ENCODE measurements at regions of chr22 and their contacts with region 1.

Region 1: GRCh38 chr22:41197038-41197972 is 7.8 kb upstream of the L3MBTL2 start:
- DNase-seq: peak; percentile 84 to 93 (median 88)
- ATAC-seq: peak; percentile 88 to 97 (median 96)
- H3K4me3 ChIP-seq: peak overlapping the region; percentile 39 to 91 (median 76)
- H3K27ac ChIP-seq: peak overlapping the region in 10 of 12 donors; percentile 0 to 74 (median 56)
- H3K4me1 ChIP-seq: peaks cover 0 to 20% (median 12%) of the 10 kb centered on the region in 12 donors
- H3K27me3 ChIP-seq: no peaks in the 10 kb centered on the region
- CTCF ChIP-seq: peak in 3 of 12 donors; percentile 17 to 33 (median 18)
- POLR2A ChIP-seq: peak in 1 of 2 donors; percentile 43

Region 2: GRCh38 chr22:41229730-41230400 is 32.6 kb after region 1 on chr22:
- intact Hi-C with region 1: loop called in 5 of 10 experiments (anchors 5 kb)
- DNase-seq: peak in 4 of 5 donors; percentile 50 to 85 (median 70)
- ATAC-seq: peak; percentile 64 to 80 (median 76)
- H3K4me3 ChIP-seq: no peak overlapping the region
- H3K27ac ChIP-seq: peak overlapping the region in 10 of 12 donors; percentile 9 to 81 (median 66)
- H3K4me1 ChIP-seq: peaks cover 0 to 44% (median 33%) of the 10 kb centered on the region in 12 donors
- H3K27me3 ChIP-seq: no peaks in the 10 kb centered on the region
- CTCF ChIP-seq: no peak
- POLR2A ChIP-seq: no peak

Region 3: GRCh38 chr22:41237707-41238569 is 40.6 kb after region 1 on chr22:
- intact Hi-C with region 1: loop called in 5 of 10 experiments (anchors 5 kb)
- DNase-seq: peak; percentile 74 to 89 (median 80)
- ATAC-seq: peak; percentile 10 to 77 (median 66)
- H3K4me3 ChIP-seq: peak overlapping the region in 11 of 12 donors; percentile 0 to 62 (median 53)
- H3K27ac ChIP-seq: peak overlapping the region in 11 of 12 donors; percentile 10 to 73 (median 58)
- H3K4me1 ChIP-seq: peaks cover 0 to 42% (median 17%) of the 10 kb centered on the region in 12 donors
- H3K27me3 ChIP-seq: no peaks in the 10 kb centered on the region
- CTCF ChIP-seq: peak; percentile 29 to 80 (median 56)
- POLR2A ChIP-seq: no peak

Region 4: DNA sequence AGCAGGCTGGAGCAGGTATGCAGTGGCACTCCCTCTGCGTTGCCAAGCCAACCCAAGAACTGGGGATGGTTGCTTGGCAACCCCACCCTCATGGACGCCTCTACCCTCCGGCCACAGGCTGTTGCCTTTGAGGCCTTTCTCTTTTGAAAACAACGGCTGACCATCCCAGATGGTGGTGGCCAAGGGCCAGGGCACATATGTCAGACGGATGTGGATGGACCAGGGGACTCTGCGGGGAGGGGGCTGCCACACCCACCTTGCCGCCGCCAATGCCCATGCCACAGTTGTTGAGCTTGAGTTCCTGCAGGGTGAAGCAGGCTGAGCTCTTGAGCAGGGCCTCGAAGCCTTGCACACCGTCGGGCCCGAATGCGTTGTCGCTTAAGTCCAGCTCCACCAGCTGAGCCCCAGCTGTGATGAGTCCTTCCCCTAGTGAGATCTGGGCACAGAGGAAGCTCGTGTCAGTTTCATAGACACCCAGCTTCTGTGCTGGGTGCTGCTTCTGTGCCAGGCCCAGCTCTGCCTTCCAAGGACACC is 67.2 kb after region 1 on chr22:
- intact Hi-C with region 1: loop called in 1 of 10 experiments (anchors 5 kb)
- DNase-seq: no peak
- ATAC-seq: no peak
- H3K4me3 ChIP-seq: no peak overlapping the region
- H3K27ac ChIP-seq: no peak overlapping the region
- H3K4me1 ChIP-seq: peaks cover 0 to 21% (median 5%) of the 10 kb centered on the region in 12 donors
- H3K27me3 ChIP-seq: no peaks in the 10 kb centered on the region
- CTCF ChIP-seq: no peak
- POLR2A ChIP-seq: no peak

Region 5: GRCh38 chr22:41285820-41286638 is 88.7 kb after region 1 on chr22 and contains the start of gene RANGAP1:
- intact Hi-C with region 1: loop called in 2 of 10 experiments (anchors 2 to 10 kb)
- DNase-seq: peak; percentile 98 to 99 (median 99)
- ATAC-seq: peak; percentile 99 to 100 (median 100)
- H3K4me3 ChIP-seq: peak within 1 kb of the TSS; percentile 59 to 97 (median 80)
- H3K27ac ChIP-seq: peak within 1 kb of the TSS; percentile 56 to 91 (median 82)
- H3K4me1 ChIP-seq: peaks cover 0 to 34% (median 17%) of the 10 kb centered on the region in 12 donors
- H3K27me3 ChIP-seq: no peaks in the 10 kb centered on the region
- CTCF ChIP-seq: peak in 10 of 12 donors; percentile 11 to 52 (median 27)
- POLR2A ChIP-seq: peak in 1 of 2 donors; percentile 90
- total RNA-seq, gene RANGAP1: 27.7 to 75.6 (median 35.0) TPM